ENCODE measurements at regions of chr12 and their contacts with region 1.

Region 1: GRCh38 chr12:11730299-11731041 is 81.0 kb downstream of the ETV6 start:
- DNase-seq: peak; percentile 54
- CTCF ChIP-seq: no peak

Region 2: DNA sequence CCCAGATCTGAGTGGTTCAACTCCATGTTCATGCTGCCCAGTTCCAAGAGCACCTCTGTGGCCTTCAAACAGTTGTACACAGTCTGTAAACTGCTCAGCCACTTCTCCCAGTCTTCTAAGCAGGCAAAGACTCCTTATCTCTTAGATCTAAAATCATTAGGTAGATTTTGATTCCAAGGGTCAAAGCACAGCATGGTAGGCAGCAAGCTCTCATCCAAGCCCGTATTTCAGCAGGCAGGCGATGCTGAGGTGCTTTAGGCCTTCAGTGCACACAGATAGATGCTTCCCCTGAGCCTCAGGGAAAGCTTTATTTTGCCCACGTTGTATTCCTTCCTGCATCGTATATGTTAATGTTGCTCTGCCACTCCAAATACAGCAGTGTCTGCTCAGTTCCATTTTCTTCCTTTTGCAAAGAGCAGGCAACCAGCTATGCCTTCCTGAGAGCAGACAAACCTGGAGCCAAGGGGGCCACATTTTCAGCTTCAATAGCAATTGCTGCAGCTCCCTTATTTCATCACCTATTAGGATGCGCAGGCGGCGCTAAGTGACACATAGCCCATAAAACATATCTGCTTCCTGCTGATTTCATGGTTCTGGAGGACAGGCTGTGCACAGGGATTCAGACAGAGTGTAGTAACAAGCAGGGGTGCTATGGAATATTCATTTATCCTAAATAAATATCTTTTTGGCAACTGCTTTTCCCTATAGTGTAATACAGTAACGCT is 13.5 kb before region 1 on chr12:
- CTCF ChIA-PET with region 1: interaction called, 10 read pairs
- POLR2A ChIA-PET with region 1: no interaction called
- DNase-seq: no peak
- CTCF ChIP-seq: no peak

Region 3: DNA sequence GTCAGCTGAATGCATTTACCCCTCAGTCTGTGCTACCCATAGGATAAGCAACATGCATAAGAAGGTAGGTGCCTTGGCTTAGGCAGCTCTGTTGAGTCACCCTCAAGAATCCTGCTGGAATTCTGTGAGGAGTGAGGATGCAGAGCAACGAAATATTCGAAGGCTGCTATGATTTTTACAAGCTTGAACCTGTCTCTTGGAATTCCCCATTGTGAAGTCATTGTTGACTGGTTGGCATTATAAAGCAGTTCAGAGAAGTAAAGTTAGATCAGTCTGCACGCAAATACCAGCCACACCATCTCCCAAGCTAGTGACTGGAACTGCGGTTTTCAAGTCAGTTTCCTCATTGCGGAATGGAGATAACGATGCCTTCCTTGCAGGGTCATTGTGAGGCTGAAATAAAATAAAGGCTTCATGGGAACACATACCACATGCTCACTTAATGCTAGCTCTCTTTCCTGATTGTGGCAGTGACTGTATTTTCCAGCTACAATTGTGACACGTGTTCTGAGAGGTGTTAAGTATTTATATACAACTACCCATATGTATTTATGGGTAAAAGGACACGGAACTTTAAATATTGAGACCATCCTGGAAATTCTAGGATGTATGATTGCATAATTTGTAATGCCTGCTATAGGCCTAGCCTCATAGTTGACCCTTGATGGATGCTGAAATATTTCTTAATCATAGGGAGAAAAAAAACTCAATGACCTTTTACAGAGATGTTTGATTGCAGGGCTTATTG is 15.7 kb after region 1 on chr12:
- CTCF ChIA-PET with region 1: interaction called, 19 read pairs
- POLR2A ChIA-PET with region 1: interaction called, 3 read pairs
- DNase-seq: no peak
- CTCF ChIP-seq: no peak

Measured in GM10248 (cell line).